ENCODE measurements at regions of chr5 and their contacts with region 1.

Region 1: DNA sequence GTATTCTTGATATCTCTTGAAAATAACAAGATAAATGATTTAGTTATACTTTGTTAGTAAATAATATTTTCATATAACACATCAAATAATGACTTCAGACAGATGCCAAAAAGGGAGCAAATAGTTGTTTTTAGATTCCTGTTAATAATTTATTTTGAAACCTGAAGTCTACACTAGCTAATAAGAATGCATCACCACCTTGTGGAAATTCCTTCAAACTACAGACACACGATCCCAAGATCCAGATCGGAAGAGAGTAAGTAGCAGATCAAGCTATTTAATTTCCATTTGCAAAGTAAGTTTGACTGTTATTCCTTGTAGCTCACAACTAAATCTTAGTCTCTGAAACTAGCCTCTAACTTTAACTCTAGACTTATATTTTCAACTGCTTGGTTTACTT is 35.5 kb upstream of the ISL1 start:
- DNase-seq: no peak
- H3K4me3 ChIP-seq: no peak overlapping the region
- H3K27ac ChIP-seq: no peak overlapping the region
- H3K4me1 ChIP-seq: no peaks in the 10 kb centered on the region
- H3K27me3 ChIP-seq: no peaks in the 10 kb centered on the region
- CTCF ChIP-seq: peak in 2 of 3 experiments; percentile 41 to 56; a peak in 2 of 4 replicates
- EP300 ChIP-seq: no peak
- POLR2A ChIP-seq: no peak
- RAD21 ChIP-seq: peak; percentile 73 to 76

Region 2: DNA sequence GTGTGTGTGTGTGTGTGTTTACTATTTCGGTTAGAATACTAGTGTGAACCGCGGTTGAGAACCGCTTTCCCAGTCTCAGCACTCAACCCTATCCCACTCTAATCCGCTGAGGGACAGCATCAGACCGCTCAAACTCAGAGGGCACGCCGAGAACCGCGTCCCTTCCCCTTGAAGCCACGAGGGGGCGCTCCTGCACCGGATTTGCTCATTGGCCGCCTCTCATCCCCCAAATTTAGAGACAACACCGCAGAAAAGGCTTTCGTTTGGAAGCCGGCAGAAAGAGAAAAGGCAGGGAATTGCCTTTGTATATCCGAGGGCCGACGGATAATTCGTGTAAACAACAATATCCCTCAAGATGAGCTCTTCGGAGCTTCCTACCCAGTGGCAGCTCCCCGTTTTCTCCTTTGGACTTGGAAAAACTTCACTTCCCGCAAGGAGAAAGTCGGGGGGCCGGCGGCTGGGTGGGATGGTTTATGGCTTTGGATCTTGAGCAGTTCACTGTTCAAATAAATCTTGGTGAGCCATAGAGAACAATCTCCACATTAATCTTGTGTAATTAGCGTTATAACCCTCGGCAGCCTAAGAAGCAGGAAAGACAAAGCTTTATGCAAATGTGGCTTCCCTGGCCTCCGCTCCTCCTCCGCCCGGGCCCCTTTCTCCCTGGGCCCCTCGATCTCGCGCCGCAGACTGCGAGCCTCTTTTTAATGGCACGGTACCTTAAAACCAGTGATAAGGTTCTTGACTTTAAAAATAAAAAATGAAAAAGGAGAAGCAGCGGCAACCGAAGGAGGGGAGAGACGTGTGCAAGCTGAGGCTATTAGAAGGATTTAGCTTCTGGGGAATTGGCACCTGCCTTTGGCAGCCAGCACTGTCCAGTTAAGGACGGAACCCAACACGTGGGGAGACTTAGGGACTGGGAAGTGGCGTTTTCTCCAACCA is 384.5 kb before region 1 on chr5:
- CTCF ChIA-PET with region 1: interaction called, 19 read pairs
- POLR2A ChIA-PET with region 1: no interaction called
- DNase-seq: peak; percentile 56 to 93
- H3K4me3 ChIP-seq: peak overlapping the region; percentile 25 to 71 (median 54); a peak in 7 of 8 replicates
- H3K27ac ChIP-seq: no peak overlapping the region
- H3K4me1 ChIP-seq: peaks cover 0 to 18% (median 6%) of the 10 kb centered on the region in 4 experiments; a peak in 5 of 7 replicates
- H3K27me3 ChIP-seq: peaks cover 41 to 51% (median 46%) of the 10 kb centered on the region in 4 experiments
- CTCF ChIP-seq: peak; percentile 99
- EP300 ChIP-seq: no peak
- POLR2A ChIP-seq: no peak
- RAD21 ChIP-seq: peak; percentile 99 to 100

Region 3: GRCh38 chr5:50995272-50995942 is 352.3 kb before region 1 on chr5:
- CTCF ChIA-PET with region 1: interaction called, 15 read pairs
- POLR2A ChIA-PET with region 1: no interaction called
- DNase-seq: no peak
- H3K4me3 ChIP-seq: no peak overlapping the region
- H3K27ac ChIP-seq: no peak overlapping the region
- H3K4me1 ChIP-seq: peaks cover 0 to 4% (median 0%) of the 10 kb centered on the region in 4 experiments; a peak in 1 of 7 replicates
- H3K27me3 ChIP-seq: no peaks in the 10 kb centered on the region; a peak in 1 of 7 replicates
- CTCF ChIP-seq: peak in 1 of 3 experiments; percentile 16; a peak in 2 of 4 replicates
- EP300 ChIP-seq: no peak
- POLR2A ChIP-seq: no peak
- RAD21 ChIP-seq: peak; percentile 49 to 52

Region 4: GRCh38 chr5:51082741-51083140 is 265.0 kb before region 1 on chr5:
- CTCF ChIA-PET with region 1: no interaction called
- POLR2A ChIA-PET with region 1: no interaction called
- DNase-seq: no peak
- H3K4me3 ChIP-seq: no peak overlapping the region
- H3K27ac ChIP-seq: no peak overlapping the region
- H3K4me1 ChIP-seq: no peaks in the 10 kb centered on the region; a peak in 1 of 7 replicates
- H3K27me3 ChIP-seq: no peaks in the 10 kb centered on the region
- CTCF ChIP-seq: no peak
- EP300 ChIP-seq: no peak
- POLR2A ChIP-seq: no peak
- RAD21 ChIP-seq: no peak

Region 5: DNA sequence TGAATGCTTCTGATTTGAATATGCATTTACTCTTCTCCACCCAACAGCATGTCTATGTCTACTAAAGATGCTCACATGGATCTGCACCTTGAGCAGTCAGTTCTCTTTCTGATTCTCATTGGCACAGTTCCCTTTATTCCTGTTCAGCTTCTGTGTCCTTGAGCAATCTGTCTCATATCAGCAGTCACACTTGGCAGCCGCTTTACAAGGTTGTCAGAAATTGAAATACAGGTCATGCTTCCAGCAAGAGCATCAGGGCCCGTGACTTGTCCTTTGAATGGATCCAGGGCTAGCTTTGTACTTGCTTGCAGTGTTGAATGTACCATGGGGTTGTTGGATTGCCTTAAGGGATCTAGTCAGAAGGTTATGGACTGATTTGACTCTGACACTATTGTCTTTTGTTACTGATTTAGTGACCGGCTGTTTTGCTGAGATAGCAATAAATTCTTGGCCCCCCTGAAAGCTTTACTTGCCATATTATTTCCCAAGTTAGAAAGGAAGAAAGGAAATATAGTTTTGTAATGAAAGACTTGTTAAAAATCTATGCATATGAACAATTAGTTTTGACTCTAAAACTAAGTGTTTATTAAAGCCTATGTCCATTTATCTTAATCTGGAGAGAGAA is 237.8 kb before region 1 on chr5:
- CTCF ChIA-PET with region 1: no interaction called
- POLR2A ChIA-PET with region 1: no interaction called
- DNase-seq: no peak
- H3K4me3 ChIP-seq: no peak overlapping the region
- H3K27ac ChIP-seq: no peak overlapping the region
- H3K4me1 ChIP-seq: no peaks in the 10 kb centered on the region
- H3K27me3 ChIP-seq: no peaks in the 10 kb centered on the region
- CTCF ChIP-seq: no peak
- EP300 ChIP-seq: no peak
- POLR2A ChIP-seq: no peak
- RAD21 ChIP-seq: no peak

Region 6: DNA sequence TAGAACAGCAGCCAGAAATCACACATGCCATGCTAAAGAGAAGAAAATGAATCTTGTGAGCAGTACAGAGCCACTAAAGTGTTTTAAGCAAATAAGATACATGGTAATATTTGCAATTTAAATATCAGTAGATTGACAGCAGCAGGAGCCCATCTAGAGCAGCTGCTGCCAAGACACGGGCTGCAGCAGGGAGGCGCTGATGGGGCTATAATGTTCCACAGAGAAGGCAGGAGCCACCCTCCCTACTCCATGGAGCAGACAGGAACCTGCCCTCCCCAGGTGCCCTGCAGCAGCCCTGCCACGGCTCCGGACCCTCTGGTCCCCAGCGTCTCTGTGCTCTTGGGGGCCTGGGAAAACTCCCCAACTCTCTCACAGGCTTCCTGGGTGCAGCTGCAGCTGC is 188.5 kb before region 1 on chr5:
- CTCF ChIA-PET with region 1: interaction called, 11 read pairs
- POLR2A ChIA-PET with region 1: no interaction called
- DNase-seq: peak in 1 of 2 experiments; percentile 48
- H3K4me3 ChIP-seq: no peak overlapping the region
- H3K27ac ChIP-seq: no peak overlapping the region
- H3K4me1 ChIP-seq: peaks cover 0 to 2% (median 0%) of the 10 kb centered on the region in 4 experiments; a peak in 2 of 7 replicates
- H3K27me3 ChIP-seq: no peaks in the 10 kb centered on the region
- CTCF ChIP-seq: peak; percentile 41 to 55 (median 52)
- EP300 ChIP-seq: no peak
- POLR2A ChIP-seq: no peak
- RAD21 ChIP-seq: peak; percentile 55 to 70

Region 7: DNA sequence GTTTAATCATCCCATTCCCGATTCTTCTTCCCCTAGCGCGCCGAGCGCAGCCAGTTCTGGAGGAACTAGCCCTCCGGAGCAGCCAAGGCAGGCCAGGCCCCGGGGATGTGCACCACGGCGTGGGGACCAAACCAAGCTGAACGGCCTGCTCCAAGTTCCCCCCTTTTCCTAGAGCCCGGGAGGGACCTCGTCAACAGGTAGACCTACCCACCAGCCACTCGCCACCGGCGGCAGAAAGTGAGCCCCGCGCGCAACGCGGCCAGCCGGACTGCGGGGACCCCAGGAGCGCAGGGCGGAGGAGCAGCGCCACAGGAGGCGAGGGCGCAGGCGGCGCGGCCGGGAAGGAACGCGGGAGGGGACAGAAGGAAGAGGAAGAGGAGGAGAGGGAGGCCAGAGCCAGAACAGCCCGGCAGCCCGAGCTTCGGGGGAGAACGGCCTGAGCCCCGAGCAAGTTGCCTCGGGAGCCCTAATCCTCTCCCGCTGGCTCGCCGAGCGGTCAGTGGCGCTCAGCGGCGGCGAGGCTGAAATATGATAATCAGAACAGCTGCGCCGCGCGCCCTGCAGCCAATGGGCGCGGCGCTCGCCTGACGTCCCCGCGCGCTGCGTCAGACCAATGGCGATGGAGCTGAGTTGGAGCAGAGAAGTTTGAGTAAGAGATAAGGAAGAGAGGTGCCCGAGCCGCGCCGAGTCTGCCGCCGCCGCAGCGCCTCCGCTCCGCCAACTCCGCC is 35.2 kb after region 1 on chr5 and contains the start of gene ISL1:
- CTCF ChIA-PET with region 1: interaction called, 11 read pairs
- POLR2A ChIA-PET with region 1: no interaction called
- DNase-seq: peak in 1 of 2 experiments; percentile 88
- H3K4me3 ChIP-seq: peak within 1 kb of the TSS; percentile 37 to 66 (median 55)
- H3K27ac ChIP-seq: no peak within 1 kb of the TSS
- H3K4me1 ChIP-seq: peaks cover 10 to 48% (median 26%) of the 10 kb centered on the region in 4 experiments
- H3K27me3 ChIP-seq: peaks cover 47 to 99% (median 81%) of the 10 kb centered on the region in 4 experiments
- CTCF ChIP-seq: no peak
- EP300 ChIP-seq: no peak
- POLR2A ChIP-seq: peak in 1 of 2 experiments; percentile 47; a peak in 1 of 3 replicates
- RAD21 ChIP-seq: no peak
- total RNA-seq, gene ISL1: 0.19 TPM in 1 of 2 replicates, not detected in the other

Region 8: DNA sequence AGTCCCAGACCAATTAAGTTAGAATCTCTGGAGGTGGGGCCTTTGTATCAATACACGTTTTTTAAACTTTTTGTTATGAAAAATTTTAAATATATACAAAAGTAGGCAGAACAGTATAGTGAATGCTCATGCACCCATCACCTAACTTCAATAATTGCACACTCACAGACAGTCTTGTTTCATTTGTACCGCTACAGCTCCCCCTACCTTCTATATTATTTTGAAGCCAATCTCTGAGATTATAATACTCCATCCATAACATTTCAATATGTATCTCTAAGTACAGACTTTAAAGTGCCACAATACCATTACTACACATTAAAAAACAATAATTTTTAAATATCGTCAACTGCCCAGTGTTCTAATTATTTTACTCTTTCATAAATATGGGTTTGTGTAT is 68.4 kb after region 1 on chr5:
- CTCF ChIA-PET with region 1: no interaction called
- POLR2A ChIA-PET with region 1: no interaction called
- DNase-seq: no peak
- H3K4me3 ChIP-seq: no peak overlapping the region
- H3K27ac ChIP-seq: no peak overlapping the region
- H3K4me1 ChIP-seq: no peaks in the 10 kb centered on the region
- H3K27me3 ChIP-seq: no peaks in the 10 kb centered on the region
- CTCF ChIP-seq: no peak
- EP300 ChIP-seq: no peak
- POLR2A ChIP-seq: no peak
- RAD21 ChIP-seq: peak in 1 of 2 experiments; percentile 21; a peak in 2 of 4 replicates